ENCODE measurements at regions of chr10 and their contacts with region 1.

Region 1: GRCh38 chr10:31883397-31883796 is 45.2 kb downstream of the ARHGAP12 start:
- DNase-seq: no peak
- H3K4me3 ChIP-seq: no peak overlapping the region
- H3K27ac ChIP-seq: no peak overlapping the region
- H3K4me1 ChIP-seq: peaks cover 5% of the 10 kb centered on the region
- H3K27me3 ChIP-seq: no peaks in the 10 kb centered on the region
- CTCF ChIP-seq: no peak

Region 2: GRCh38 chr10:31707093-31708039 is 176.0 kb before region 1 on chr10:
- CTCF ChIA-PET with region 1: no interaction called
- dilution Hi-C with region 1: no loop called
- in situ Hi-C with region 1: no loop called
- intact Hi-C with region 1: no loop called
- DNase-seq: peak; percentile 32
- H3K4me3 ChIP-seq: no peak overlapping the region
- H3K27ac ChIP-seq: no peak overlapping the region
- H3K4me1 ChIP-seq: no peaks in the 10 kb centered on the region
- H3K27me3 ChIP-seq: no peaks in the 10 kb centered on the region
- CTCF ChIP-seq: no peak

Region 3: GRCh38 chr10:32017021-32017420 is 133.6 kb after region 1 on chr10:
- CTCF ChIA-PET with region 1: no interaction called
- dilution Hi-C with region 1: loop called (anchors 5 kb)
- in situ Hi-C with region 1: no loop called
- intact Hi-C with region 1: no loop called
- DNase-seq: no peak
- H3K4me3 ChIP-seq: no peak overlapping the region
- H3K27ac ChIP-seq: no peak overlapping the region
- H3K4me1 ChIP-seq: no peaks in the 10 kb centered on the region
- H3K27me3 ChIP-seq: no peaks in the 10 kb centered on the region
- CTCF ChIP-seq: no peak